ENCODE measurements at regions of chr12 and their contacts with region 1.

Region 1: DNA sequence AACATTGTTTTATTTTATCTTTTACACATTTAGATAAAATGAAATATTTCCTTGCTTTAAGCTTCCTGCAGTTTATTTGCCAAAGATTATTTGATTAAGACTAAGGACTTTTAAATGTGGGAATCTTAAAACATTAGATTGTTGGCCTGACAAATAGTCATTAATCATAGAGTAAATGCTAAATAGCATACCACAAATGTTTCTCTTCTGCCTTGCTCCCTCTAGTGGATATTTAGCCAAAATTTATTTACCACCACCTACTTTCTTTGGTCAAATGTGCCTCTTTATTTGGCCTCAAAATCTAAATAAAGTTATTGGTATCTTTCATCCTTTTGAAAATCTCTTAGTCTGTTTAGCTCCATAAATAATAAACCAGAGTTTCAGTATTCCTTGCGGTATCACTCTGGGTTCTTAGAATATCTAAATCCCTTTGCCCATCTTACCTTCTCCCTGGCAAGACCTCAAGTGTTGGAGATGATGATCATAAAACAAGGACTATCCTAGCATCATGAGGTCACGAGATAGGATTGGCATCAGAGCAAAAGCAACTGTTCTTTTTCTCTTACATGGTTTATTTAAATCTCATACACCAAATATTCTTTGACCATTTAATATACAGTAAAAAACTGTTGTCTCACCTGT is 150.6 kb upstream of the AEBP2 start:
- DNase-seq: no peak
- ATAC-seq: no peak
- H3K4me3 Mint-ChIP-seq: no peak overlapping the region
- H3K27ac Mint-ChIP-seq: no peak overlapping the region
- H3K4me1 Mint-ChIP-seq: no peaks in the 10 kb centered on the region
- H3K27me3 Mint-ChIP-seq: no peaks in the 10 kb centered on the region
- CTCF ChIP-seq: no peak

Region 2: DNA sequence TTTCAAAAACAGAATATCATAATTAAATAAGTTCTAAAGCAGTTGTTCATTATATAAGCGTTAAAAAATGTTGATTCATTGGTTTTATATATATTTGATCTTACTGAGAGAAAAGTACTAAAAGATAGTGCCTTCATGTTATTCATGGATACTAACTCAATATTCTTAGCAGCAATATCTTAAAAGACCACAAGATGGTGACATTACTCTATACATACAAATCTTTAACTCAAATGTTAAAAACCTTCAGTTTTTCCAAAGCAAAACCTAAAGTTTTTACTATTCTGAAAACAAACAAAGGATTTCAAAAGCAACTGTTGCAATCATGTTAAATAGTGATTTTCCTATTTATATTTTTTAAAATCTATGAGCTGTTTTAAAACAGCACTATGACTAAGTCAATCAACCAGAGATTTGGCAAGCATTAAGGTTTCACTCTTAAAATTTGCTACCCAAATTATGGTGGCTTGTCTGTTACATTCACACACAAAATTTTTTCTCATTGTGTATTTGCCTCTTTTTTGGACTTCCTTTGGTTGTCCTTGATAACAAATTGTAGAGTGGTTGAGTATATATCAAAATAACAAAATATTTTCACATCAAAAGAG is 1148.6 kb before region 1 on chr12:
- CTCF ChIA-PET with region 1: no interaction called
- POLR2A ChIA-PET with region 1: no interaction called
- intact Hi-C with region 1: loop called (anchors 2 kb)
- DNase-seq: no peak
- ATAC-seq: no peak
- H3K4me3 Mint-ChIP-seq: no peak overlapping the region
- H3K27ac Mint-ChIP-seq: no peak overlapping the region
- H3K4me1 Mint-ChIP-seq: peaks cover 5% of the 10 kb centered on the region
- H3K27me3 Mint-ChIP-seq: no peaks in the 10 kb centered on the region
- CTCF ChIP-seq: no peak

Region 3: GRCh38 chr12:18861287-18861858 is 427.4 kb before region 1 on chr12:
- CTCF ChIA-PET with region 1: no interaction called
- POLR2A ChIA-PET with region 1: no interaction called
- intact Hi-C with region 1: loop called (anchors 2 kb)
- DNase-seq: no peak
- ATAC-seq: no peak
- H3K4me3 Mint-ChIP-seq: no peak overlapping the region
- H3K27ac Mint-ChIP-seq: no peak overlapping the region
- H3K4me1 Mint-ChIP-seq: no peaks in the 10 kb centered on the region
- H3K27me3 Mint-ChIP-seq: no peaks in the 10 kb centered on the region
- CTCF ChIP-seq: no peak

Region 4: DNA sequence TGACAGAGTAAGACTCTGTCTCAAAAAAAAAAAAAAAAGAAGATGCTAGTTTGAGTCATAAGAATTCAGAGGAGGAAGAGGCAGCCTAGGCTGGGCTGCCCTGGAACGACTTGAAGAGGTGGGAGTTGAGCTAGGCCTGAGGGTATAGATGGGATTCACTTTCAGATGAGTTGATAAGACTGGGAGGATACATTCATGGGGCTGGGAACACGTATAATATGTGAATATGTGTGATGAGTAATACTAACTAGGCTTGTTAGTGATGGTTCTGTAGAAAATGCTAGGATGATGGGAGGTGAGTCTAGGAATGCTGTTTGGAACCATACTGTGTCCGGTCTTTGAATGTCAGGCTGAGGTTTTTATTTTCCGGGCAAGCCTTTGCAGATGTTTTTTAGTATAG is 150.2 kb before region 1 on chr12:
- CTCF ChIA-PET with region 1: no interaction called
- POLR2A ChIA-PET with region 1: no interaction called
- intact Hi-C with region 1: no loop called
- DNase-seq: no peak
- ATAC-seq: no peak
- H3K4me3 Mint-ChIP-seq: no peak overlapping the region
- H3K27ac Mint-ChIP-seq: no peak overlapping the region
- H3K4me1 Mint-ChIP-seq: no peaks in the 10 kb centered on the region
- H3K27me3 Mint-ChIP-seq: no peaks in the 10 kb centered on the region
- CTCF ChIP-seq: no peak

Region 5: GRCh38 chr12:19338405-19338804 is 49.7 kb after region 1 on chr12:
- CTCF ChIA-PET with region 1: no interaction called
- POLR2A ChIA-PET with region 1: no interaction called
- intact Hi-C with region 1: no loop called
- DNase-seq: no peak
- ATAC-seq: no peak
- H3K4me3 Mint-ChIP-seq: no peak overlapping the region
- H3K27ac Mint-ChIP-seq: no peak overlapping the region
- H3K4me1 Mint-ChIP-seq: no peaks in the 10 kb centered on the region
- H3K27me3 Mint-ChIP-seq: no peaks in the 10 kb centered on the region
- CTCF ChIP-seq: no peak

Measured in activated B cell treated with CpG ODN at 0.5 μM for 24 hours (primary cell).